HCT116 (cell line): ENCODE measurements at regions of chr1 and their contacts with region 1.

Region 1: GRCh38 chr1:177948336-177948972 is 21.4 kb downstream of the SEC16B start:
- DNase-seq: peak; percentile 55
- ATAC-seq: peak; percentile 79
- H3K4me3 ChIP-seq: no peak overlapping the region
- H3K27ac ChIP-seq: no peak overlapping the region
- H3K4me1 ChIP-seq: no peaks in the 10 kb centered on the region
- H3K27me3 ChIP-seq: no peaks in the 10 kb centered on the region
- CTCF ChIP-seq: peak; percentile 75 to 94 (median 91)
- POLR2A ChIP-seq: no peak
- RAD21 ChIP-seq: peak; percentile 77

Region 2: GRCh38 chr1:176559878-176560277 is 1388.6 kb before region 1 on chr1:
- CTCF ChIA-PET with region 1: no interaction called
- POLR2A ChIA-PET with region 1: no interaction called
- RAD21 ChIA-PET with region 1: no interaction called
- intact Hi-C with region 1: loop called (anchors 10 kb)
- DNase-seq: peak; percentile 44
- ATAC-seq: peak; percentile 95
- H3K4me3 ChIP-seq: no peak overlapping the region
- H3K27ac ChIP-seq: no peak overlapping the region
- H3K4me1 ChIP-seq: no peaks in the 10 kb centered on the region
- H3K27me3 ChIP-seq: peaks cover 25% of the 10 kb centered on the region
- CTCF ChIP-seq: peak; percentile 67 to 91 (median 74)
- POLR2A ChIP-seq: no peak
- RAD21 ChIP-seq: peak; percentile 87

Region 3: DNA sequence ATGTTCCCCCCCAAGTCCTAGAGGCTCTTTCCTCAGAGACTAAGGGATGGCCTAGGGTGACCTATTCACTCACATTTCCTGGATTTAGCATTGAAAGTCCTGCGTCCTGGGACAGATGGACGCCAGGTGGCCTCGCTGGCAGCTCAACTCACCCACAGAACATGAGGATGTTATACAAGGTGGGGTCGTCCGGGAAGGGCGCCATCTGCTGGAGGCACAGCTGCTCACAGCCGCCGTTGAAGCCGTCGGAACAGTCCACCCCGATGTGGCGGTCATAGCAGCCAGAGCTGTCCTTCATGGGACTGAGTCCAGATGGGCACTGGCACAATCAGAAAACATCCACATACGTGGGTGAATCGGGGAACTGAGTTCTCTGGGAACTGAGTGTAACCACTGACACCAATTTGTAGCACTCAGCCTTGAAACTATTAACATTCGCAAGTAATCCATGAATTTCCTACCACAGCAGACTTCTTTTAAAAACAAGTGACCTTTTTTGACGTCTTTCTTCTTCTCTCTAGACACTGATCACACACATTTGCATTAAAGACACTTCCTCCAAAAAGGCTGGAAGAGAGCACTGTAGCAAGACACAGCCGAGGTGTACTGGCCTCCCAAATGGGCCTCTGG is 999.3 kb before region 1 on chr1:
- CTCF ChIA-PET with region 1: interaction called, 3 read pairs
- POLR2A ChIA-PET with region 1: no interaction called
- RAD21 ChIA-PET with region 1: no interaction called
- intact Hi-C with region 1: loop called (anchors 1 kb)
- DNase-seq: peak; percentile 63
- ATAC-seq: peak; percentile 99
- H3K4me3 ChIP-seq: no peak overlapping the region
- H3K27ac ChIP-seq: no peak overlapping the region
- H3K4me1 ChIP-seq: no peaks in the 10 kb centered on the region
- H3K27me3 ChIP-seq: peaks cover 16% of the 10 kb centered on the region
- CTCF ChIP-seq: peak; percentile 86 to 99 (median 91)
- POLR2A ChIP-seq: no peak
- RAD21 ChIP-seq: peak; percentile 70

Region 4: DNA sequence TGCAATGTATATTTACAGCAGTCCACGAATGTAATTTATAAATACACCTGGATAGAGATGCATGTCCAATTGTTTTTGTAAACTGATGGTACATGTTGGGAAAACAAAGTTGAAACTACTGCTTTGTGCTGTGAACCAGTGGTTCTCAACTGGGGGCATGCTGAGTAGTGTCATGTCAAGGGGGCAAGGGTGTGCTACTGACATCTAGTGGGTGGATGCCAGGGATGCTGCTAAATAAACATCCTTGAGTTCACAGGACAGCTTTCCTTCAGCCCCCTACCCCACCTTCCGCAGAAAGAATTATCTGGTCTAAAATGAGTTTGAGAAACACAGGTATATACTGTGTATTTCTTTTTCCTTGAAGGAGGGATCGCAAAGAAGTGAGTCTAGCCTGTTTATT is 241.4 kb after region 1 on chr1:
- CTCF ChIA-PET with region 1: interaction called, 3 read pairs
- POLR2A ChIA-PET with region 1: no interaction called
- RAD21 ChIA-PET with region 1: no interaction called
- intact Hi-C with region 1: loop called (anchors 1 kb)
- DNase-seq: peak; percentile 13
- ATAC-seq: peak; percentile 82
- H3K4me3 ChIP-seq: no peak overlapping the region
- H3K27ac ChIP-seq: no peak overlapping the region
- H3K4me1 ChIP-seq: peaks cover 0 to 4% of the 10 kb centered on the region in 2 experiments; a peak in 2 of 4 replicates
- H3K27me3 ChIP-seq: no peaks in the 10 kb centered on the region
- CTCF ChIP-seq: peak; percentile 57 to 73 (median 70); a peak in 5 of 6 replicates
- POLR2A ChIP-seq: no peak
- RAD21 ChIP-seq: peak; percentile 69

Region 5: GRCh38 chr1:179002552-179003345 is 1054.3 kb after region 1 on chr1:
- CTCF ChIA-PET with region 1: no interaction called
- POLR2A ChIA-PET with region 1: no interaction called
- RAD21 ChIA-PET with region 1: no interaction called
- intact Hi-C with region 1: loop called (anchors 10 kb)
- DNase-seq: no peak
- ATAC-seq: peak; percentile 91
- H3K4me3 ChIP-seq: no peak overlapping the region
- H3K27ac ChIP-seq: no peak overlapping the region
- H3K4me1 ChIP-seq: peaks cover 0 to 11% of the 10 kb centered on the region in 2 experiments; a peak in 3 of 4 replicates
- H3K27me3 ChIP-seq: no peaks in the 10 kb centered on the region
- CTCF ChIP-seq: peak; percentile 96 to 97 (median 97)
- POLR2A ChIP-seq: no peak
- RAD21 ChIP-seq: peak; percentile 98